HEK293 (cell line): ENCODE measurements at regions of chr7 and their contacts with region 1.

Region 1: DNA sequence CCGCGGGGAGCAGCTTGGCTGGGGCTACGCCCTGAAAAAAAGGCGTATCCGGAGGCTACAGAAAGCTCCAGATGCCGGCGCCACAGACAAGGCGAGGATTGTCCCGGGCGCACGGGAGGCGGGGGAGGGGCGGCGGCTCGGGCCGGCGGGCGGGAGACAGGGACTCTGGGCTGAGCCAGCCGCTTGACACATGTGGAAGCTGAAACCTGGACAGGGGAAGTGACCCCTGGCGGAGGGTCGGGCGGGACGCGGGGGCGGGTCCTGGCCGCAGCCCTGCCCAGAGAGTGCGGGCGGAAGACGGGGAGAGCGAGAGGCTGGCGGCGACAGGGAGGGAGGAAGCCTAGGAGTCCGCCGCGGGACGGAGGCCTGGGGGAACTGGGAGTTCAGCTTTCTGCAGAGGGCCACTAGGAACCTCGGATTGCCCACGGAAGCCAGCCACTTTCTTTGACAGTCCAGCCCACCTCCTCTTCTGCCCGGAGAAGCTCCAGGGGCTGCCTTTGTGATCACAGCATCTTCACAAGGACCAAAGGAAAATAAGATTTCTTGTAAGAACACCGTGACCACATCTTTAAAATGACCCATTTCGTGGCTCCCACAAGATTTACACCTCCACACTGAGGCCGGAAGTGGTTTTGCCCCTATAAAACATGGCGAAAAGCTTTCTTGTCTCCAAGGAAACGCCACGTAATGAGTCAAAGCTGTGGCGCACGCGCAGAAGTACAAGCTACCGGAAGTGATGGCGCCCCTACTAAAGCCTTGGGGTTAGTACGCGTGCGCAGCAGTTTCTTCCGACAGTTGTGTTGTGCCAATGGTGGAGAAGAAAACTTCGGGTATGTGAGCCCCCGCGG is at the starts of genes PLOD3 and ZNHIT1:
- H3K4me3 ChIP-seq: peak within 1 kb of the TSS; percentile 59
- H3K27ac ChIP-seq: peak within 1 kb of the TSS; percentile 65
- H3K4me1 ChIP-seq: 0 out of 2 replicates have a peak, but pooled peaks cover 3% of the 10 kb centered on the region
- CTCF ChIP-seq: peak; percentile 63; the same call in 1 of the 2 replicates

Region 2: GRCh38 chr7:100662377-100662776 is 555.2 kb before region 1 on chr7:
- CTCF ChIA-PET with region 1: no interaction called
- POLR2A ChIA-PET with region 1: no interaction called
- H3K4me3 ChIP-seq: no peak overlapping the region
- H3K27ac ChIP-seq: no peak overlapping the region
- H3K4me1 ChIP-seq: no peaks in the 10 kb centered on the region
- CTCF ChIP-seq: no peak

Region 3: DNA sequence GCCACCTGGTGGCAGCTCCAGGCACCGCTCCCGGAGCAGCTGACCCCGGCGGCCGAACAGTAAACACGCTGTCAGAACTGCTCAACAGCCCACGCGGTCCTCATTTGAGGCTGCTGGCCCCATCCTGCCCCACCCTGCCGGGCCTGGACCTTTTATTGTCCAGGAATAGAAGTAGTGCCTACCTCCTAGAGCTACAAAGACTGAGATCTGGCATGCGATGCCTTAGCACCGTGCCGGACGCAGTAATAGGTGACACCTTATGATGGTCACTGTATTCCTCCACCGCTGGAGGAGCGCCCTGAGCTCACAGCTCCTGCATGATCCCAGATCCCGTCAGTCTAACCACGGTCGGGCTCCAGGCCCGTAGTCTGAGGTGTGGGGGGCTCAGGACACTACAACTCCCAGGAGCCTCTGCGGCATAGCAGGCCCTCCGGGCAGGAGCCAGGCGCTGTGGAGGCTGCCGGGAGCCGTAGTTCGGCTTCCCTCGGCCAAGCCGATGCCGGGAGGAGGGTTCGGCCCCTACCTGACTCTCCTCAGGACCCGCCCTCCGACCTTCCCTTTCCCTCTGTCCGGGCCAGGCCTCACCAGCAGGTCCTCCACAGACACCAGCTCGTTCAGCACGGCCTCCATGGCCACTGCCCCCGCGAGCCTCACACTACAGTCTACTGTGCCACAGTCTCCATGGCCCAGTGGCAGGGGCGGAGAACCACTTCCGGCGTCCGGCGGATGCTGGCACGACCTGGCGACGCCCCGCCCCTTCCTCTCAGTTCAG is 26.9 kb after region 1 on chr7 and contains the start of gene FIS1:
- CTCF ChIA-PET with region 1: interaction called, 21 read pairs
- POLR2A ChIA-PET with region 1: interaction called, 23 read pairs
- H3K4me3 ChIP-seq: peak within 1 kb of the TSS; percentile 73
- H3K27ac ChIP-seq: peak within 1 kb of the TSS; percentile 53
- H3K4me1 ChIP-seq: peaks cover 2% of the 10 kb centered on the region; the same call in 1 of the 2 replicates
- CTCF ChIP-seq: peak; percentile 93

Region 4: DNA sequence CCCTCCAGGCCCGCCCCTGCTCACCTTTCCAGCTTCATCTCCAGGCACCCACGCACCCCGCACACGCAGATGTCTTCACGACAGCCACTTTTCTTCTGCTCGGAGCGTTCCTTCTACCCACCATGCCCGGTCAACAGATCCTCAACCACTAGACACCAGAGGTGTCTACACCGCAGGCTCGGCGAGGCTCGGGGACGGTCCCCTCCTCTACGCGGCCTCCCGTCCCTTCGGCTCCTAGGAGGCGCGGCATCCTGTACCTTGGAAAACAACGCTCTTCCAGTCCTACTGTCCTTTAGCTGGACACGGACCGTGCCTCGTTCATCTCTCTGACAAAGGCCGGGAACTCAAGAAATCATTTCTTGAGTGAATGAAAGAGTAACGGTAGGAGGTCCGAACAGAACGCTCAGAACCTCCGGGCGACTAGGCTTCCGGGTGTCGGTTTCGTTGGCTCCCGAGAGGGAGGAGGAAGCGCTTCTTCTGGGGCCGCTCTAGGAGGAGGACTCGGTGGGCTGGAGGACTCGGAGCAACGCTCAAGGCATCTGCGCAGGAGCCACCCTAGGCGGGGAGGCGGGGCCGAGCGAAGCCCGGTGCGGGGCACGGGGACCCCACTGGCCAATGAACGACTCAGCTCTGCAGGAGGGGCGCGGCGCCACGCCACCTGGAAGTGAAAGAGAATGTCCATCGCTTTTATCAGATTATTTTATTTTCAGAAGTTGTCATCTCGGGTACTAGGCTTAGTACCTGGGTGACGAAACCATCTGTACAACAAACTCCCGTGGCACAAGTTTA is 34.5 kb after region 1 on chr7:
- CTCF ChIA-PET with region 1: interaction called, 3 read pairs
- POLR2A ChIA-PET with region 1: interaction called, 16 read pairs
- H3K4me3 ChIP-seq: peak overlapping the region; percentile 82
- H3K27ac ChIP-seq: peak overlapping the region; percentile 46
- H3K4me1 ChIP-seq: no peaks in the 10 kb centered on the region
- CTCF ChIP-seq: no peak